Transverse colon (tissue), 4 donors: ENCODE measurements at regions of chr12 and their contacts with region 1.

Region 1: GRCh38 chr12:122609732-122610131 is 82.7 kb downstream of the KNTC1 start:
- DNase-seq: no peak
- H3K4me3 ChIP-seq: no peak overlapping the region
- H3K27ac ChIP-seq: no peak overlapping the region
- H3K4me1 ChIP-seq: no peaks in the 10 kb centered on the region
- H3K27me3 ChIP-seq: no peaks in the 10 kb centered on the region
- CTCF ChIP-seq: no peak
- EP300 ChIP-seq: no peak
- POLR2A ChIP-seq: no peak

Region 2: GRCh38 chr12:122215771-122216170 is 394.0 kb before region 1 on chr12:
- in situ Hi-C with region 1: no loop called
- intact Hi-C with region 1: no loop called
- DNase-seq: no peak
- H3K4me3 ChIP-seq: no peak overlapping the region
- H3K27ac ChIP-seq: no peak overlapping the region
- H3K4me1 ChIP-seq: no peaks in the 10 kb centered on the region
- H3K27me3 ChIP-seq: no peaks in the 10 kb centered on the region
- CTCF ChIP-seq: no peak
- EP300 ChIP-seq: no peak
- POLR2A ChIP-seq: no peak

Region 3: DNA sequence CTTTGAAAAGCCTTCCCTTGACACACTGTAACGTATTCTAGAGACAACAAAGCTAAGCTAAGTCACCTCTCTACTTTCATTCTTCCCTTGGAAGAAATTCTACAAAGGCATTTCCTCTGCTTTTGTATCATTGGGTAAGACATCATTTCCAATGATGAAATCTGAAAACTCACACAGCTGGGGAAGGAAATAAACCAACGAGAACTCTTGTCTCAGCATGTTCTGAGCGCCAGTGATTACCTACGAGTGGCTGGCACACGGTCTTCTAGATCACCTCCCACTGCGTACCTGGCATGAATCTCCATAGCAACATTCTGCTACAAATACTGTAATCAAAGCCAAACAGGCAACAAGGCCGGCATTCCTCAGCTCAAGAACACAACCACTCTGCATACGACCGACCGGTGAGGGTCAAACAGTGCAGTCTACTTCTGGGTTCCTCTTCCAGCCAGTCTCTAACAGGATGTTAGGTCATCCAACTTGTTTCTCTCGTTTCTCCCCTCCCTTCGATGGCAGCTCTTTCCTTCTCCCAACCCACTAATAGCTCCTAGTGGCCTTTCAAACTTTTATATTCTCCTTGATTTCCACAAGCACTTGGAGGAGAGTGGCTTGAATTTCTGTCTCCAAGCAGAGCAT is 278.6 kb after region 1 on chr12:
- in situ Hi-C with region 1: no loop called
- intact Hi-C with region 1: loop called (anchors 5 kb)
- DNase-seq: peak; percentile 78
- H3K4me3 ChIP-seq: peak overlapping the region in 1 of 4 donors; percentile 5
- H3K27ac ChIP-seq: peak overlapping the region; percentile 93 to 98 (median 95)
- H3K4me1 ChIP-seq: peaks cover 56 to 97% (median 85%) of the 10 kb centered on the region in 4 donors
- H3K27me3 ChIP-seq: no peaks in the 10 kb centered on the region
- CTCF ChIP-seq: peak in 1 of 5 experiments; percentile 6
- EP300 ChIP-seq: peak; percentile 52
- POLR2A ChIP-seq: peak; percentile 69